Heart right ventricle (tissue), 16 donors: ENCODE measurements at regions of chr1 and their contacts with region 1.

Region 1: GRCh38 chr1:224513787-224514209 is 79.2 kb upstream of the WDR26 start:
- DNase-seq: peak; percentile 85 to 87
- ATAC-seq: peak; percentile 89 to 95 (median 92)
- H3K4me3 ChIP-seq: no peak overlapping the region
- H3K27ac ChIP-seq: no peak overlapping the region
- H3K4me1 ChIP-seq: peaks cover 0 to 8% (median 0%) of the 10 kb centered on the region in 9 donors
- H3K27me3 ChIP-seq: no peaks in the 10 kb centered on the region
- CTCF ChIP-seq: peak; percentile 83 to 97 (median 92)

Region 2: DNA sequence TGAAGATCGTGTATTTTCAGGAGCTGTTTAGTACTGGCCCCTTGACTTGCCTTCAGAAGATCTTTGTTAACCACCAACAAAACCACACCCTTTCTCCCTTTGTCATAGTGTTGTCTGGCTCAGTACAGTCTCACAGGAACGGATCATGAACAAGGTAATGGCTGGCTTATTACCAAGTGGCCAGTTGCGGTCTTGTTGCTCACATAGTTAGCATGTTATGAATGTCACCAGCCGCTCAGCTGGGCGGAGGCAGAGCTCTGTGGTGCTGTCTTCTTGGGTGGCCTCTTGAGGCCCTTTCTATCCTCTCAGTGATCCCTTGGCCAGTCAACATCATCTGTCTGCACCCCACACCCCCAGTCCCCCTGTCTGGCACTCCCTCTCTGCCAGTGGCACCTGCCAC is 123.7 kb after region 1 on chr1:
- intact Hi-C with region 1: loop called in 3 of 10 experiments (anchors 5 to 10 kb)
- DNase-seq: no peak
- ATAC-seq: no peak
- H3K4me3 ChIP-seq: no peak overlapping the region
- H3K27ac ChIP-seq: no peak overlapping the region
- H3K4me1 ChIP-seq: no peaks in the 10 kb centered on the region
- H3K27me3 ChIP-seq: peaks cover 0 to 39% (median 6%) of the 10 kb centered on the region in 7 donors
- CTCF ChIP-seq: no peak

Region 3: GRCh38 chr1:224644553-224645154 is 130.9 kb after region 1 on chr1:
- intact Hi-C with region 1: loop called in 3 of 10 experiments (anchors 5 to 10 kb)
- DNase-seq: peak in 1 of 2 donors; percentile 41
- ATAC-seq: peak in 7 of 8 donors; percentile 28 to 72 (median 52)
- H3K4me3 ChIP-seq: no peak overlapping the region
- H3K27ac ChIP-seq: no peak overlapping the region
- H3K4me1 ChIP-seq: peaks cover 0 to 8% (median 0%) of the 10 kb centered on the region in 9 donors
- H3K27me3 ChIP-seq: peaks cover 0 to 24% (median 0%) of the 10 kb centered on the region in 7 donors
- CTCF ChIP-seq: peak; percentile 79 to 88 (median 84)

Region 4: DNA sequence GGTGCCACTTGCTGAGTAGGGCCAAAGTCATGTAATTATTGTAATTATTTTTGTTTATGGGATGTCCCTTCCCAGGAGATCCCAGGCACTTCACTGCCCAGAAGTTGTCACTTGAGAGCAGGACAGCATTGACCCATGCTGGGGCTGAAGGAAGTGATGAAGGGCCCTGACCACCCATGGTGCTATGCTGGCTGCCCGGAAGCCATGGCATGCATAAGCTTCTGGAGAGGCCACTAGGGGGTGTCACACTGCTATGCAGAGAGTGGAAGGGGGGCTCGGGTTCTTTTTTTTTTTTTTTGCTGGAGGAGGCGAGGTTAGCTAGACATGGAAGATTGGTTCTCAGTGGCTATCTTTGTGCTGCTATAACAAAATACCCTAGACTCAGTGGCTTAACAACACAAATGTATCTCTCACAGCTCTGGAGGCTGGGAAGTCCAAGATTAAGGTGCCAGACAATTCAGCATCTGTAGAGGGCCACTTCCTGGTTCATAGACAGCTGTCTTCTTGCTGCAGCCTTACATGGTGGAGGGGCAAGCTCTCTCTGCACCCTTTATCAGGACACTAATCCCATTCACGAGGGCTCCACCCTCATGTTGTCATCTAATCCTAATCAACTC is 187.2 kb after region 1 on chr1:
- intact Hi-C with region 1: no loop called
- DNase-seq: no peak
- ATAC-seq: no peak
- H3K4me3 ChIP-seq: no peak overlapping the region
- H3K27ac ChIP-seq: no peak overlapping the region
- H3K4me1 ChIP-seq: no peaks in the 10 kb centered on the region
- H3K27me3 ChIP-seq: peaks cover 0 to 6% (median 0%) of the 10 kb centered on the region in 7 donors
- CTCF ChIP-seq: peak in 4 of 9 donors; percentile 6 to 36 (median 12)

Region 5: GRCh38 chr1:224851210-224851847 is 337.5 kb after region 1 on chr1:
- intact Hi-C with region 1: loop called (anchors 1 to 5 kb)
- DNase-seq: peak; percentile 18 to 44
- ATAC-seq: peak in 6 of 8 donors; percentile 7 to 53 (median 40)
- H3K4me3 ChIP-seq: no peak overlapping the region
- H3K27ac ChIP-seq: no peak overlapping the region
- H3K4me1 ChIP-seq: no peaks in the 10 kb centered on the region
- H3K27me3 ChIP-seq: peaks cover 0 to 7% (median 0%) of the 10 kb centered on the region in 7 donors
- CTCF ChIP-seq: peak; percentile 16 to 76 (median 54)

Region 6: GRCh38 chr1:224859651-224860050 is 345.9 kb after region 1 on chr1:
- intact Hi-C with region 1: loop called in 4 of 10 experiments (anchors 2 to 5 kb)
- DNase-seq: no peak
- ATAC-seq: no peak
- H3K4me3 ChIP-seq: no peak overlapping the region
- H3K27ac ChIP-seq: no peak overlapping the region
- H3K4me1 ChIP-seq: no peaks in the 10 kb centered on the region
- H3K27me3 ChIP-seq: peaks cover 0 to 22% (median 0%) of the 10 kb centered on the region in 7 donors
- CTCF ChIP-seq: no peak

Region 7: GRCh38 chr1:224922404-224923164 is 408.8 kb after region 1 on chr1:
- intact Hi-C with region 1: loop called (anchors 2 to 5 kb)
- DNase-seq: no peak
- ATAC-seq: peak in 6 of 8 donors; percentile 24 to 65 (median 64)
- H3K4me3 ChIP-seq: no peak overlapping the region
- H3K27ac ChIP-seq: no peak overlapping the region
- H3K4me1 ChIP-seq: no peaks in the 10 kb centered on the region
- H3K27me3 ChIP-seq: peaks cover 0 to 3% (median 0%) of the 10 kb centered on the region in 7 donors
- CTCF ChIP-seq: peak; percentile 57 to 76 (median 69)

Region 8: DNA sequence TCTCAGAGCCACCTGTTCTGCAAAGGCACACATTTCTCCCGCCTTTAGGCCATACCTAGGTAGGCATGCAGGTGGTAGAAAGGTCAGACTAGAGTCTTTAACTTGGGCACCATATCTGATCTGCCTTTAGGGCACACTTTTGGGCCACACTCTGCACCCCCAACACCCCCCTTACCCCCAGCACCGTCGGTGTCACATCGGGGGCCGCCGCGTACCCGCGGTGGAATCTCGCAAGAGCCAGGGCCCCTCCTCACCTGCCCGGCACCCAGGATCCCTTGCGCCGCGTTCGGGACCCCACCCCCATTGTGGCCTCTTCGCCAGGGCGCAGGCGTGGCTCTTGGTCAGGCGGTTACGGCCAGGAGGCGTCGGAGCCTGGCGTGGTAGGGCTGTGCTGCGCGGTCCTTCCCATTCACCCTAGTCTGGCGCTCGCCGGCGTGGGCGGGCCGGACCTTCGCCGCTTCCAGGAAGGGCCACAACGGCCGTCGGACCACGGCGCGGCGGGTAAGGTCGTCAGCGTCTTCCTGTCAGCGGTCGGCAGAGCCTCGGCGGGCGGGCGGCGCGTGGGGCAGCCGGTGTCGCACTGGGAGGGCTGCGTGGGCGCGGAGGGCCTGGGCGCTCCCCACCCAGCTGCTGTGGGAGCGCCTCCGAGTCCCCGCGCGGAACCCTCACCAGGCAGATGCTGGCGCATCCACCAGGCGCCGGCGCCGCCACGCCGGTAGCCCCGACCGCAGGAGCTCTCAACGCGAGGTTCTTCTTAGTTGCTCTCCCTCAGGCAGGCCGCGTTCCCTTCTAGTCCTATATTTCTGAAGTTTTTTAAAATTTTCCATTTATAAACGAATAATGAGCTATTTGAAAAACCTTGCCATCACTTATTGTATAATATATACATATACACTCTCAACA is 415.8 kb after region 1 on chr1 and contains the start of gene DNAH14:
- intact Hi-C with region 1: loop called in 8 of 10 experiments (anchors 5 kb)
- DNase-seq: peak; percentile 13 to 57
- ATAC-seq: peak; percentile 62 to 99 (median 72)
- H3K4me3 ChIP-seq: peak within 1 kb of the TSS in 9 of 10 donors; percentile 28 to 57 (median 46)
- H3K27ac ChIP-seq: peak within 1 kb of the TSS in 1 of 10 donors; percentile 42
- H3K4me1 ChIP-seq: peaks cover 0 to 5% (median 0%) of the 10 kb centered on the region in 9 donors
- H3K27me3 ChIP-seq: peaks cover 0 to 24% (median 18%) of the 10 kb centered on the region in 7 donors
- CTCF ChIP-seq: no peak
- total RNA-seq, gene DNAH14: 0.81 to 8.0 (median 2.7) TPM